PC-9 (cell line): ENCODE measurements at regions of chr11 and their contacts with region 1.

Region 1: GRCh38 chr11:126268708-126269579 is at the starts of genes FOXRED1 and SRPRA:
- DNase-seq: peak; percentile 97 to 99
- H3K4me3 ChIP-seq: peak within 1 kb of the TSS; percentile 95
- H3K27ac ChIP-seq: peak within 1 kb of the TSS; percentile 63
- H3K4me1 ChIP-seq: peaks cover 18% of the 10 kb centered on the region
- H3K27me3 ChIP-seq: no peaks in the 10 kb centered on the region
- CTCF ChIP-seq: no peak
- total RNA-seq, gene FOXRED1: 40.4 and 43.2 TPM in 2 replicates
- total RNA-seq, gene SRPRA: 53.3 and 57.1 TPM in 2 replicates

Region 2: GRCh38 chr11:125923012-125923579 is 345.8 kb before region 1 on chr11:
- CTCF ChIA-PET with region 1: no interaction called
- POLR2A ChIA-PET with region 1: no interaction called
- intact Hi-C with region 1: loop called (anchors 10 kb)
- DNase-seq: peak; percentile 60 to 61
- H3K4me3 ChIP-seq: no peak overlapping the region
- H3K27ac ChIP-seq: no peak overlapping the region
- H3K4me1 ChIP-seq: no peaks in the 10 kb centered on the region
- H3K27me3 ChIP-seq: peaks cover 21% of the 10 kb centered on the region
- CTCF ChIP-seq: peak; percentile 84

Region 3: GRCh38 chr11:126211235-126212088 is 57.5 kb before region 1 on chr11 and contains the starts of genes FAM118B and RPUSD4:
- CTCF ChIA-PET with region 1: no interaction called
- POLR2A ChIA-PET with region 1: no interaction called
- intact Hi-C with region 1: loop called (anchors 1 kb)
- DNase-seq: peak; percentile 87 to 98
- H3K4me3 ChIP-seq: peak within 1 kb of the TSS; percentile 72
- H3K27ac ChIP-seq: peak within 1 kb of the TSS; percentile 43
- H3K4me1 ChIP-seq: peaks cover 18% of the 10 kb centered on the region
- H3K27me3 ChIP-seq: no peaks in the 10 kb centered on the region
- CTCF ChIP-seq: no peak
- total RNA-seq, gene FAM118B: 12.5 and 13.1 TPM in 2 replicates
- total RNA-seq, gene RPUSD4: 25.1 and 26.0 TPM in 2 replicates

Region 4: GRCh38 chr11:126282736-126283591 is 14.0 kb after region 1 on chr11 and contains the start of gene TIRAP:
- CTCF ChIA-PET with region 1: no interaction called
- POLR2A ChIA-PET with region 1: interaction called, 3 read pairs
- intact Hi-C with region 1: loop called (anchors 1 kb)
- DNase-seq: peak; percentile 64 to 68
- H3K4me3 ChIP-seq: peak within 1 kb of the TSS; percentile 83
- H3K27ac ChIP-seq: peak within 1 kb of the TSS; percentile 77
- H3K4me1 ChIP-seq: peaks cover 23% of the 10 kb centered on the region
- H3K27me3 ChIP-seq: no peaks in the 10 kb centered on the region
- CTCF ChIP-seq: no peak
- total RNA-seq, gene TIRAP: 9.6 and 12.7 TPM in 2 replicates

Region 5: GRCh38 chr11:126391970-126392639 is 123.2 kb after region 1 on chr11:
- CTCF ChIA-PET with region 1: no interaction called
- POLR2A ChIA-PET with region 1: no interaction called
- intact Hi-C with region 1: no loop called
- DNase-seq: no peak
- H3K4me3 ChIP-seq: no peak overlapping the region
- H3K27ac ChIP-seq: no peak overlapping the region
- H3K4me1 ChIP-seq: peaks cover 13% of the 10 kb centered on the region
- H3K27me3 ChIP-seq: no peaks in the 10 kb centered on the region
- CTCF ChIP-seq: no peak